BJ (cell line): ENCODE measurements at regions of chr9 and their contacts with region 1.

Region 1: DNA sequence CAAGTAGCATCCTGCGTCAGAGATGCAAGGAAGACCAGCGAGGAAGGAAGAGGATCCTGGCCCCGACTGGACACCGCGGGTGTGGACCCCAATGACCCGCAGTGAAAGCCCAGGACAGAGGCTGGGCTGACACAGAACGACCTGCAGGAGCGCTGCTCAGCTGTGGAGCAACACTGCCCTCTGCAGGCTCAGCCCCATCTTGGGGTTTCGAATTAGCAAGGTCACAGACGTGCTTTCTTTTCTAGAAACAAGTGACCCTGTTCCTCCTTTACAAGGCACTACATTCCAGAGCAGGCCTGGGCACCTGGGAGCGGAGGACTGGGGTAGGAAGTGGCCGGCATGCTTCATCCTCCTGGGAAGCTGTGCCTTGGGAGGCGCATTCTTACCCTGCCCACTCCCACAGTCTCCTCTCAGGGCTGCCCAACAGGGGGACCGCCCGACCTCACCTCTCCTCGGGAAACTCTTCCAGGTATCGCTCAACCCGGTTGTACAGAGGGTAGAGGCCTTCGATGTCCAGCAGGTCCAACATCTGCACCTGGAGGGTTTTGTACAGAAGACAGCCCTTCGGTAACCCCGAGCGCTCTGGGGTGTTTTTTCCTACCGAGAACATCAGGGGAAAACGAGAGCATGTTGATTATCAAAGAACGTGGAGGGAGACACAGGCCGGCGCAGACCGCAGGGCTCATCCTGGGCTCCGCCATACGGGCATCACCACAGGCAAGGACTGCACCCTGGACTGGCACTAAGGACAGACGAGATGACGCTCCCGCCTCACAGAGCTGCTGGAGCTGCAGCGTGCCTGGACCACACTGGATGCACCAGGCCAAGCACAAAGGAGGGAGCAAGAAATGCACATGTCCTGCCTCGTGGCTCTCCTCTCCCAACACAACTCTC is 35.0 kb downstream of the IPPK start:
- DNase-seq: no peak
- H3K4me3 ChIP-seq: no peak overlapping the region
- H3K27me3 ChIP-seq: no peaks in the 10 kb centered on the region
- CTCF ChIP-seq: peak; percentile 97

Region 2: GRCh38 chr9:92325269-92325990 is 309.5 kb before region 1 on chr9 and contains the starts of genes CENPP and NOL8:
- CTCF ChIA-PET with region 1: interaction called, 19 read pairs
- POLR2A ChIA-PET with region 1: no interaction called
- DNase-seq: peak; percentile 42
- H3K4me3 ChIP-seq: peak within 1 kb of the TSS; percentile 64
- H3K27me3 ChIP-seq: no peaks in the 10 kb centered on the region
- CTCF ChIP-seq: no peak
- polyA plus RNA-seq, gene CENPP: 1.3 and 2.3 TPM in 2 replicates
- polyA plus RNA-seq, gene NOL8: 8.8 and 17.3 TPM in 2 replicates

Region 3: DNA sequence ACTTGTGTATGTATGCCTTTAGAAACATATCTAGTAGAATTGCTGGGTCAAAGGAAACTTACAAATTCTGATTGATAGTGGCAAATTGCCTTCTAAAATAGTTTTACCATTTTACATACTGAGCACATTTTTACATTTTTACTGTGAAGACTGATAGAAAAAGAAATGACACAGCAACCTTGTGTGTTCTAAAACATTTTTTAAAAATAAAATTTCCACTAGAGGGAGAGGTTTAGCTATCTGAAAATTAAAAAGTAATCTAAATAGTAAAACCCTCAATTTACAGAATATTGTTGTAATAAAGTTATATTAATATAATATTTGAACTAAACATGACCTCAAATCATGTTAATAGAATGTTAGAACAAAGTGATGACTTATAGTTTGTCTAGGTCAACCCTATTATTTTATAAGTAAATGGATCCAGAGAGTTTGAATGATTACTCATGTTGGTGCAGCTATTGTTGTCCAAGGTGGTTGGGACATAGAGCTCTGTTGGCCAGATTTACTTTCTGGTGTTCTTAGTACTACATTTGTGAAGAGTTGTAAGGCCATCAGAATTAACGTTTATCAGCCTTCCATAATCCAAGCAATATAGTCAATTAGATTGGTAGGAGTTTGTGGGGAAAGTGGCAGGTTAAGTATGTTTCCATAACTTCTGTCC is 292.0 kb before region 1 on chr9:
- CTCF ChIA-PET with region 1: interaction called, 34 read pairs
- POLR2A ChIA-PET with region 1: no interaction called
- DNase-seq: no peak
- H3K4me3 ChIP-seq: no peak overlapping the region
- H3K27me3 ChIP-seq: no peaks in the 10 kb centered on the region
- CTCF ChIP-seq: peak; percentile 26; the same call in 1 of the 2 replicates

Region 4: DNA sequence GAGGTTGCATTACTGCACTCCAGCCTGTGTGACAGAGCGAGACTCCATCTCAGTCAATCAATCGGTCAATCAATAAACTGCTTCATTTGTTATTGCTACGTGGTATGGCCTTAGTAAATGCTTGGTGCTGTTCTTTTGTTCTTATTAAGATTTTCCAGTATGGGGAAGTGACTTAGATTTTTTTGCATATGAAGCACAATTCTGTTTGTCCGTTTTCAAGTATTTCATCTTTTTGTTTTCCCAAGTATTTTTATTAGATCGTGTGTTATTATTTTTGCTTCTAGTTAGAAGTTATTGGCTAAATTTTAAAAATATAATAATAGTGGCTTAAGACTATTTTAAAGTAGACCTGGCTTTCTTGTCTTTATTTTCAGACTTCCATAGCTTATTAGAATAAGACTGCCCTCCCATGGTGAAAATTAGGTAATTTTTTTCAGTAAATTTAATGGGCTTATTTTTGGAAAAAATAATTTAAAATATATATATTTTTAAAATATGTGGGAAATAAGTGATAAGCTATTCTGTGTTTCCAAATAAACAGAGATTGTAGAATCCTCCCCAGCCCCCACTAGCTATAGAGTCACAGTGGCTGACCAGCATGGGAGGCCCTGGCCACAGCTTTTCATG is 195.9 kb before region 1 on chr9:
- CTCF ChIA-PET with region 1: interaction called, 15 read pairs
- POLR2A ChIA-PET with region 1: no interaction called
- DNase-seq: no peak
- H3K4me3 ChIP-seq: no peak overlapping the region
- H3K27me3 ChIP-seq: no peaks in the 10 kb centered on the region
- CTCF ChIP-seq: peak; percentile 21; the same call in 1 of the 2 replicates

Region 5: GRCh38 chr9:92550765-92551164 is 84.2 kb before region 1 on chr9:
- CTCF ChIA-PET with region 1: no interaction called
- POLR2A ChIA-PET with region 1: no interaction called
- DNase-seq: no peak
- H3K4me3 ChIP-seq: no peak overlapping the region
- H3K27me3 ChIP-seq: no peaks in the 10 kb centered on the region
- CTCF ChIP-seq: no peak

Region 6: DNA sequence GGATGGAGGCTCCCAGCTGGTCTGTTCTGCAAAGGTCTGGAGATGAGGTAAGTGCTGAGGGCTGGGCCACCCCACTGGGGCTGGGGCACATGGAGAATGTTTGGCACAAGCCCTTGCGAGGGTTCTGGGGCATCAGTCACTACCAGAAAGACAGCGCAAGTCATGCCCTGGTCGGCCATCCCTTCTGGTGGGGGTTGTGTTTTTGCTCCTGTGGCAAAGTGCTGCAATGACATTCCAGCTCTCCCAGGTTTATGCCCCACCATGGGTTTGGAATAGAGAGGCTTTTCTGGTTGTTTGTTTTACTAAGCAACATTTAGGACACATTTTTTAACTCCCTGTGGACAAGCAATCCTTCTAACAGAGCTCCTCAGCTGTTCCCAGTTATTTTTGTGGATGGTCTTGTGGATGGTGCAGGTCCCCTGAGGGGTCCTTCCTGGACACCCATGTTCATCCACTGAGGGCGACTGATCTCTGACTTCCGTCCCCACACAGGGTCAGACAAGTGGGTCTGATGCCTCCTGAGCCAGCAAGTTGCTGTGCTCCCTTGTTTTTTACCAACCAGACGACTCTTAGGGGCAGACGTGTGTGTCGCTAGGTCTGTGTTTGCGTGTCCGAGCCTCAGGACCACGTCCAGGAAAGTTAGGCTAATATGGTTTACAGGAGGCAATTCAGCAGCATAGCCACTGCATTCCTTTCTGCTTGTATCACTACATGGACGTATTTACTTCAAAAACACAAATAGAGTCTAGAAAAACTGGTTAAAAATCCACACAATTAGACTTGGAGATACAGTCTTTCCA is 34.3 kb before region 1 on chr9:
- CTCF ChIA-PET with region 1: no interaction called
- POLR2A ChIA-PET with region 1: no interaction called
- DNase-seq: peak; percentile 47
- H3K4me3 ChIP-seq: no peak overlapping the region
- H3K27me3 ChIP-seq: no peaks in the 10 kb centered on the region
- CTCF ChIP-seq: no peak

Region 7: DNA sequence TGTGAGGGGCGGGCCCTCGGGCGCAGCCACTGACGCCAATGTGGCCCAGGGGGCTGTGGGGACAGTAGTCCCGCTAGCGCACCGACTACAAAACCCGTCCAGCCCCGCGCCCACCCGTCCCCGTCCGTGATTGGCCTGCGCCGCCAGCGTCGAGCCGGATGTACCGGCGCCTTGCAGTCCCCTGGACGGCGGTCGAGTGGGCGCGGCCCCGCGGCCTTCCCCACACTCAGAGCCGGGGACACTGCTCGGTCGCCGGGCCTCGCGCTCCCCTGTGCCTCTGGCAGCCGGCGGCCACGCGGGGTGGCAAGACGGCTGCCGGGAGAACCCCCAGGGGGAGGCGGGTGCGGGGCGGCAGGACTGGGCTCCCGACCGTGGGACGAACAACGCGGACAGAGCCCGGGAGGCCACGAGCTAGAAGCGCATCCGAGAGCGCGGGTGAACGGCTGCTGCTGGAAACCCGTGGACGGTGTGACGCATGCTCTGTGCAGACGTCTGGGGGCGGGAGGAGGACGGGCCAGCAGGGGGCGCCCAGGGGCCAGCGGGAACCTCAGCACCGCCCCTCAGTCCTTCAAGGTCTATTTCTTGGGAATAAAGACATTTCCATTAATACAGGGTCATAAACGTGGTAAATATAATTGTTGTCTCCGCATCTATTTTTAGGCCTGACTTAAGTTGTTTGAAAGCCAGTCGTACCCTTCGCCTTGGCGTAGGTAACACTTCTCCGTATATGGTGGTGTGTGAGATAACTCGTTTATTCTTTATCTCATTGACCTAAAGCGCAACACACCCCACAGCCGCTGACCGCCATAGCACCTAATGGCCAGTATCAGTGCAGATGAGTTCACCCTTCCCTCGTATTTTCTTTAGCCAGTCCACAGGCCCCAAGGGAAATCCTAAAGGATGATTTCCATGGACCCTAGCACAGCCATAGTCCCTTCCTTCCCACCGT is 130.3 kb after region 1 on chr9:
- CTCF ChIA-PET with region 1: no interaction called
- POLR2A ChIA-PET with region 1: no interaction called
- DNase-seq: peak; percentile 86
- H3K4me3 ChIP-seq: peak overlapping the region; percentile 89
- H3K27me3 ChIP-seq: no peaks in the 10 kb centered on the region; the same call in 1 of the 2 replicates
- CTCF ChIP-seq: peak; percentile 99

Region 8: GRCh38 chr9:93343693-93344092 is 708.7 kb after region 1 on chr9:
- CTCF ChIA-PET with region 1: no interaction called
- POLR2A ChIA-PET with region 1: no interaction called
- DNase-seq: no peak
- H3K4me3 ChIP-seq: no peak overlapping the region
- H3K27me3 ChIP-seq: peaks cover 12% of the 10 kb centered on the region
- CTCF ChIP-seq: no peak